Endothelial cell of umbilical vein (primary cell): ENCODE measurements at regions of chr10 and their contacts with region 1.

Region 1: GRCh38 chr10:70478191-70479164 is at the start of gene PALD1:
- DNase-seq: peak; percentile 46
- H3K4me3 ChIP-seq: peak within 1 kb of the TSS; percentile 35 to 71 (median 36)
- H3K27ac ChIP-seq: no peak within 1 kb of the TSS
- H3K4me1 ChIP-seq: peaks cover 44% of the 10 kb centered on the region
- H3K27me3 ChIP-seq: peaks cover 0 to 2% of the 10 kb centered on the region in 2 experiments
- CTCF ChIP-seq: peak in 1 of 2 donors; percentile 8
- POLR2A ChIP-seq: no peak
- total RNA-seq, gene PALD1: 62.1 and 73.3 TPM in 2 replicates

Region 2: DNA sequence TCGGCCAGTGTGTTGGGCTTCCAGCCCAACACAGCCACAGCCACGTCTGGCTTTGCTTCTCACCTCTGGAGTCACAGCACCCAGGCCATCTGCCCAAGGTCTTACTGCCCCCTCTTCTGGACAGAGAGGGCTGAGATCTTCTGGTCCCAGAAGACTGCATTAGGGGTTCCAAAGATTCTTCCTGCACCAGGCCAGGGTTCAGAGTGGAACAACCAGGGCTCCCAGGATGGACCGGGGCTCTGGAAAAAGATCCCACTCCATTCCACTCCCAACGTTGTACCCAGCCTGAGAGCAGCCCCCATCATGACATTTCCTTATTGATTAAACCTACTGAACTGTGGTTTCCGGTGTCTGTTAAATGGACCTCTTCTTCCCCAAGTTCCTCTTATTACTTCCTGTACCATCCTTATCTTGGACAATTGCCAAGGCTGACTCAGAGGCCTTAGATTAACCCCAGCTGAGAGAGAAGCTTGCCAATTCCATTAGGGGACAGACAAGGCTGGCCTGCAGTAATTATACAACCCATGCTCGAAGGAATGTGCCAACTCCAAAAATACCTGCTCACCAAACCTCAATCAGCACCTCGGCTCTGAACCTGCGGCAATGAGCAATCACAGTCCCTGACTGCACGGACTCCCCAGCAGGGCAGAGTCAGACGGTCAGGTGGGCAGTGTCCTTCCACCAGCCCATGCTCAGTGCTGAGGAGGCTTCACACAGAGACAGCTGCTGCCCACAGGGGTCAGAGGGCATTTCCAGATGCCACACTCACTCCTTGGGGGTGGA is 146.8 kb before region 1 on chr10:
- CTCF ChIA-PET with region 1: no interaction called
- POLR2A ChIA-PET with region 1: no interaction called
- dilution Hi-C with region 1: no loop called
- intact Hi-C with region 1: no loop called
- DNase-seq: peak; percentile 71
- H3K4me3 ChIP-seq: no peak overlapping the region
- H3K27ac ChIP-seq: no peak overlapping the region
- H3K4me1 ChIP-seq: peaks cover 8% of the 10 kb centered on the region
- H3K27me3 ChIP-seq: peaks cover 22 to 26% of the 10 kb centered on the region in 2 experiments
- CTCF ChIP-seq: peak in 1 of 2 donors; percentile 11
- POLR2A ChIP-seq: no peak

Region 3: GRCh38 chr10:70404036-70404786 is 74.3 kb before region 1 on chr10 and contains the start of gene EIF4EBP2:
- CTCF ChIA-PET with region 1: no interaction called
- POLR2A ChIA-PET with region 1: no interaction called
- dilution Hi-C with region 1: no loop called
- intact Hi-C with region 1: loop called (anchors 2 kb)
- DNase-seq: peak; percentile 99
- H3K4me3 ChIP-seq: peak within 1 kb of the TSS; percentile 64 to 83 (median 79)
- H3K27ac ChIP-seq: peak within 1 kb of the TSS; percentile 42
- H3K4me1 ChIP-seq: peaks cover 28% of the 10 kb centered on the region
- H3K27me3 ChIP-seq: no peaks in the 10 kb centered on the region
- CTCF ChIP-seq: no peak
- POLR2A ChIP-seq: peak; percentile 90
- total RNA-seq, gene EIF4EBP2: 46.6 and 47.0 TPM in 2 replicates

Region 4: GRCh38 chr10:70500812-70501301 is 22.4 kb after region 1 on chr10:
- CTCF ChIA-PET with region 1: interaction called, 3 read pairs
- POLR2A ChIA-PET with region 1: interaction called, 3 read pairs
- dilution Hi-C with region 1: no loop called
- intact Hi-C with region 1: loop called (anchors 2 kb)
- DNase-seq: peak; percentile 67
- H3K4me3 ChIP-seq: no peak overlapping the region
- H3K27ac ChIP-seq: peak overlapping the region; percentile 84
- H3K4me1 ChIP-seq: peaks cover 44% of the 10 kb centered on the region
- H3K27me3 ChIP-seq: no peaks in the 10 kb centered on the region
- CTCF ChIP-seq: no peak
- POLR2A ChIP-seq: no peak

Region 5: GRCh38 chr10:70508912-70509756 is 30.7 kb after region 1 on chr10:
- CTCF ChIA-PET with region 1: interaction called, 7 read pairs
- POLR2A ChIA-PET with region 1: no interaction called
- dilution Hi-C with region 1: no loop called
- intact Hi-C with region 1: loop called (anchors 1 kb)
- DNase-seq: peak; percentile 92
- H3K4me3 ChIP-seq: no peak overlapping the region
- H3K27ac ChIP-seq: peak overlapping the region; percentile 73
- H3K4me1 ChIP-seq: peaks cover 29% of the 10 kb centered on the region
- H3K27me3 ChIP-seq: no peaks in the 10 kb centered on the region
- CTCF ChIP-seq: peak; percentile 9 to 12
- POLR2A ChIP-seq: no peak